ENCODE measurements at regions of chr18 and their contacts with region 1.

Region 1: GRCh38 chr18:72752220-72752619 is 115.6 kb downstream of the NETO1 start:
- DNase-seq: no peak
- H3K4me3 ChIP-seq: no peak overlapping the region
- H3K27ac ChIP-seq: no peak overlapping the region
- H3K4me1 ChIP-seq: no peaks in the 10 kb centered on the region
- CTCF ChIP-seq: no peak

Region 2: DNA sequence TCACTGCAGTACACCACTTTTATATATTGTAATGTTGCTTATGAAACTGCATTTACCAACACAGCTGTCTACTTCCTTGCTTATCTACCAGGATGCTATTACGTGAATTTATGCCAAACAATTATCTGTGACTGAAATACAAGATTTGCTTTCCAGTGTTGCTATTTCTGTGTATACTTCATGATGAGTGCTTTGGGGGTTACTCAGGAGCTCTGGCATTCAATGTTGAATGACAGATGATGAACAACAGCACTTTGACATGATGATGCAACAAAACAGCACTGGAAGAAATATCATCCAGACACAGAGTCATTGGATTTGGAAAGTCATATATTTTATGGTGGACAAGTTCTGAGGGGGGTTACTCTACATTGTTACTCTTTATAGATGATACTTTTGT is 10.2 kb before region 1 on chr18:
- CTCF ChIA-PET with region 1: no interaction called
- POLR2A ChIA-PET with region 1: interaction called, 10 read pairs
- intact Hi-C with region 1: no loop called
- DNase-seq: no peak
- H3K4me3 ChIP-seq: no peak overlapping the region
- H3K27ac ChIP-seq: no peak overlapping the region
- H3K4me1 ChIP-seq: no peaks in the 10 kb centered on the region
- CTCF ChIP-seq: no peak